Activated T-helper 2 cell treated with anti-CD3 and anti-CD28 coated beads, Interferon-gamma antibody, Interleukin-2, Interleukin-4, amounts not matched to agents 10 μg/mL and 5 μg/mL and 100 μg/mL, durations not matched to agents 14 hours and 24 hours and 36 hours (primary cell): ENCODE measurements at regions of chr19 and their contacts with region 1.

Region 1: DNA sequence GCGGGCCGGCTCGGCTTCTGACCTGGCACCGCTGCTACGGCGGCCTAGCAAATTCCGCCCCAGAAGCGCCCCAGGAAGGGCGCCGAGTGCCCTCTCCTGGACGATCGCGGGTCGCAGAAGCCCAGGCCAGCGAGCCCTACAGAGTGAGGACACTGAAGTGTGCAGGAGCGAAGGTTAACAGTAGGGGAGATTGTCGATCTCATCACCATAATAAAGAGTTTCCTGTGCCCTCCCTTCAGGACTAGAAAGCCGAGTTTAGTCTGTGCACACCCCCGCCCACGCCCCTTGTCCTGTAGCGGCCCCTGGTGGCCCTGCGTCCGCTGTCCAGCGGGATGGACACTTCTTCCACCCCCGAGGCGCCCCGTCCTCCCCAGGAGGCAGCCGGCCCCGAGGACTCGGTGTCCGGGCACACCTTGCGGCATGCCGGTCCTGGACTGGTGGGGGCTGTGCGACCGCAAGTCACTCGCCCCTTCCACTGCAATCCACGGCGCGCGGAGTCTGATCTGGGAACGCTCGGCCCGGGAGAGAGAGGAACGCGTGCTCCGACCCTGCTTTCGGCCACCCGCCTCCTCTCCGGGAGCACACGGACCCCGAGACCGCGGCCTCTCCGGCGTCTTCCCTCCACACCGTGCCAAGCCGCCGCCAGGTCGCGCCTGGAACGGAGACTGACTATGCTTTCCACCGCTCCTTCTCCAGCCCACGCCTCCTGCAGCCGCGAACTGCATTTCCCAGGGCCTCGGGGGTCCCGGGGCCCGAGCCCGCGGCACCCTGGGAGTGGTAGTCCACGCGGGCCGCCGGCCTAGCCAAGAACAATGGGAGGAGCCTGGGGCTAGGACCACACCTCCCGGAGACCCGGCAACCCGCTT is 769 bp upstream of the KMT2B start:
- DNase-seq: peak; percentile 97
- H3K4me3 Mint-ChIP-seq: peak overlapping the region; percentile 94
- H3K27ac Mint-ChIP-seq: peak overlapping the region; percentile 92
- H3K4me1 Mint-ChIP-seq: peaks cover 35% of the 10 kb centered on the region
- H3K27me3 Mint-ChIP-seq: no peaks in the 10 kb centered on the region

Region 2: DNA sequence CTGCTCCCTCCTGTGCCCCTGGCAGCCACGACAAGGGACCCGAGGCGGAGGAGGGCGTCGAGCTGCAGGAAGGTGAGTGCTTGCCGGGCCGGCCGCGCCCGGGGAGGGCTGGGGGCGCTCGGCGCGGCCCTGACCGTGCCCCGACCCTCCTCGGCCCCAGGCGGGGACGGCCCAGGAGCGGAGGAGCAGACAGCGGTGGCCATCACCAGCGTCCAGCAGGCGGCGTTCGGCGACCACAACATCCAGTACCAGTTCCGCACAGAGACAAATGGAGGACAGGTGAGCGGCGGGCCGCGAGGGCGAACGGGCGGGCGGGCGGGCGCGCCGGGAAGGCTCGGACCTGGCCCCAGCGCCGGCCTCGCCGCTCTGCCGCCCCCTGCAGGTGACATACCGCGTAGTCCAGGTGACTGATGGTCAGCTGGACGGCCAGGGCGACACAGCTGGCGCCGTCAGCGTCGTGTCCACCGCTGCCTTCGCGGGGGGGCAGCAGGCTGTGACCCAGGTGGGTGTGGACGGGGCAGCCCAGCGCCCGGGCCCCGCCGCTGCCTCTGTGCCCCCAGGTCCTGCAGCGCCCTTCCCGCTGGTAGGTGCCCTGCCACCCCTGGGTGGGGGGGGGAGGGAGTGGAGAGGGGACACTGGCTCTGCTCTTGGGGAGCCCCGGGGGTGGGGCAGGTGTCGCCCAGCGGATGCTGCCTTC is 447.5 kb before region 1 on chr19:
- intact Hi-C with region 1: loop called (anchors 5 kb)
- DNase-seq: peak; percentile 76
- H3K4me3 Mint-ChIP-seq: peak overlapping the region; percentile 72
- H3K27ac Mint-ChIP-seq: peak overlapping the region; percentile 67
- H3K4me1 Mint-ChIP-seq: peaks cover 12% of the 10 kb centered on the region
- H3K27me3 Mint-ChIP-seq: no peaks in the 10 kb centered on the region

Region 3: DNA sequence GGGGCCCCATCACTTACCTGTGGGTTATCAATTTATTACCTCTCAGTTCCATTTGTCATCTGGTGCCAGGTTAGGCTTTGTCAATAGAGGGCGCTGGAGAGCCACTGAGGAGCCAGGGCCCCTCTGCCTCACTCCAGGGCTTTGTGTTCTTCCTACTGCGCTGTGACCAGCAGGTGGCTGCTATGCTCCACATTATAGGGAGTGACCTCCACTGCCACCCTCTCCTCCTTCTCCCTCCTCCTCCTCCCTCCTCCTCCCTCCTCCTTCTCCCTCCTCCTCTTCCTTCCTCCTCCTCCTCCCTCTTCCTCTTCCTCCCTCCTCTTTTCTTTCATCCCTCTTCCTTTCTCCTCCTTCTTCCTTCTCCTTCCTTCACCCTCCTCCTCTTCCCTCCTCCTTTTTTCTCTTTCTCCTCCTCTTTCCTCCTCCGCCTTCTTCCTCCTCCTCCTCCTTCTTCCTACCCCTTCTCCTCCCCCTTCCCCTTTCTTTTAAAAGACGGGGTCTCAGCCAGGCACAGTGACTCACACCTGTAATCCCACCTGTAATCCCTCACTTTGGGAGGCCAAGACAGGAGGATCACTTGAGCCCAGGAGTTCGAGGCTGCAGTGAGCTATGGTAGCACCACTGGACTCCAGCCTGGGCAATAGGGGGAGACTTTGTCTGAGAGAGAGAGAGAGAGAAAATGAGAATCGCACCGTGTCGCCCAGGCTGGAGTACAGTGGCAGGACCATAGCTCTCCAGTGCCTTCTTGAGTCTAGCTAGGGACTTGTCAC is 23.0 kb before region 1 on chr19:
- intact Hi-C with region 1: loop called (anchors 1 kb)
- DNase-seq: peak; percentile 85
- H3K4me3 Mint-ChIP-seq: no peak overlapping the region
- H3K27ac Mint-ChIP-seq: peak overlapping the region; percentile 35
- H3K4me1 Mint-ChIP-seq: peaks cover 13% of the 10 kb centered on the region
- H3K27me3 Mint-ChIP-seq: no peaks in the 10 kb centered on the region

Region 4: DNA sequence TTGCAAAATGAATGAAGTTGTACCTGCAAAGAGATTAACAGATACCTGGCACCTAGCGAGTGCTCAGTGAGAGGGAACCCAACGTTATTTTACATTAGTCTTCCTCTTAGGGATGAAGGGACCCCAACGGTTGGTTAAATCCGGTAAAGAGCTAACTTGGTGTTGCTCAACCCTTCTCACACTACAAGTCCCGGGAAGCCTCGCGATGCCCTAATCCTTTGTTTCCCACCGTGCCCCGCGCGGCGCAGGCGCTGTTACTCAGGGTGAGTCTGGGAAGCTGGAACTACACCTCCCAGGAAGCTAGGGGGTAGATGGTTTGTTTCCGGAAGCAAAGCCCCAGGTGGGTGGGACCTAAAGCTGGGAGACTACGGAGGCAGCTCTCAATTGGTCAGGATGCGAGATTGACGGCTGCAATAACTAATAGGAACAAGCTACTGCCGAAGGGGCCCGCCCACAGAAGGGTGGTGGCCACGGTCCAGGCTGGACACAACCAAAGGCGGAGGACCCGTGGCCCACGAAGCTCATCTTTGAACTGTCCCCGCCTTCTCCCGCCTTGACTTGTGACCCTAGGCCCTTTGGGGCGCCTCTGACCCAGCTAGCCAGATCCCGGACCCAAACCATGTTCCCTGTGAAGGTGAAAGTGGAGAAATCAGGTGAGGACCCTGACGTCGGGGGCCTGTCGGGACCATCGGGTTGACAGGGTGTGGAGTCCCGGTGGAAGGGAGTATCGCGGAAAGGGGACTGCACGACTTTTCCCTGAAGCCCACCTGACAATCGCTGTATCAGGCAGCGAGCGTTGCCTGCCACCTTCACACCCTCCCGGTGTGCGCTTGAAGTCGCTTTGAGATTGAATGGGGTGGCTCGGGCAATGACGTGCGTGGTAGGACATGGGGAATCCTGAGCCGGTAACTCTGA is 31.3 kb after region 1 on chr19 and contains the start of gene LIN37:
- intact Hi-C with region 1: loop called (anchors 1 kb)
- DNase-seq: peak; percentile 98
- H3K4me3 Mint-ChIP-seq: peak within 1 kb of the TSS; percentile 95
- H3K27ac Mint-ChIP-seq: peak within 1 kb of the TSS; percentile 90
- H3K4me1 Mint-ChIP-seq: peaks cover 31% of the 10 kb centered on the region
- H3K27me3 Mint-ChIP-seq: no peaks in the 10 kb centered on the region
- total RNA-seq, gene LIN37: 9.9 and 10.0 TPM in 2 replicates

Region 5: DNA sequence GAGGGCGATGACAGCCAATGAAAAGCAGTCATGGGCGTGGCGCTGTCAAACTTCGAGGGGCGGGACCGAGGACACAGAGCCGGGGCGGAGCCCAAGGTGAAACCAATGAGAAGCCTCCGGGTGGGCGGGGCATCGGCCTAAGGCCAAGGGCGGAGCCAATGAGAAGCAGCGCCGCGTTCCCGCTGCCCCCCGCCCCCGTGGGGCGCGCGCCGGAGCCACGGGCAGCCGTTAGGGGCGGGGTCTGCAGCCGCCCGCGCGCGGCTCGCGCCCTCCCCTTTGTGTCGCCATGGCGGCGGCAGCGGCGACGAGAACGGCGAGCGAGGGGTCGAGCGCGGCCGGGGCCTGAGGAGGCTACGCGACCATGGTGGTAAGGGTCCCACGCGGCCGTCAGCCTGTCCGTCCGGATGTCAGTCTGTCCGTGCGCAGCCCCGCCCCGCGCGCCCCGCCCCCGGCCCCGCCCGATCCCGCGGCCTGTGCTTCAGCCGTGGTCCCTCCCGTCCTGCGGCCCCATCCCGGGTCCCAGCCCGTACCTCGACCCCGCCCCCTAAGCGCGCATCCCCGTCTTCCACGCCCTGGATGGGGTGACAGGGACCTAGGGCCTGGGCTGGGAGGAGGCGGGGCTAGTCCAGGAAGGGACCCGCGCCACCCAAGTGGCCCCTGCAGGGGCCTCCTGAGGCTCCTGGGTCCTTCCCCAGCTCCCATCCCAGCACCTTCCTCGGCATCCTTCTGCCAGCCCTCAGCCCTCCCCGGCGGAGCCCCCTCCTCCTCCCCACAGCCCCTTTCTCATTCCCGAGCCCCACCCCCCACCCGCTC is 58.5 kb after region 1 on chr19 and contains the start of gene ARHGAP33:
- intact Hi-C with region 1: loop called (anchors 1 kb)
- DNase-seq: peak; percentile 99
- H3K4me3 Mint-ChIP-seq: peak within 1 kb of the TSS; percentile 86
- H3K27ac Mint-ChIP-seq: peak within 1 kb of the TSS; percentile 73
- H3K4me1 Mint-ChIP-seq: peaks cover 21% of the 10 kb centered on the region
- H3K27me3 Mint-ChIP-seq: no peaks in the 10 kb centered on the region
- total RNA-seq, gene ARHGAP33: 29.1 and 33.0 TPM in 2 replicates